Activated T-helper 1 cell treated with anti-CD3 and anti-CD28 coated beads, Interleukin-12 subunit alpha, Interleukin-12 subunit beta, Interleukin-2, Interleukin-4 antibody, amounts not matched to agents 30 ng/mL and 10 ng/mL and 1 ng/mL, durations not matched to agents 14 hours and 24 hours and 36 hours (primary cell): ENCODE measurements at regions of chr6 and their contacts with region 1.

Region 1: DNA sequence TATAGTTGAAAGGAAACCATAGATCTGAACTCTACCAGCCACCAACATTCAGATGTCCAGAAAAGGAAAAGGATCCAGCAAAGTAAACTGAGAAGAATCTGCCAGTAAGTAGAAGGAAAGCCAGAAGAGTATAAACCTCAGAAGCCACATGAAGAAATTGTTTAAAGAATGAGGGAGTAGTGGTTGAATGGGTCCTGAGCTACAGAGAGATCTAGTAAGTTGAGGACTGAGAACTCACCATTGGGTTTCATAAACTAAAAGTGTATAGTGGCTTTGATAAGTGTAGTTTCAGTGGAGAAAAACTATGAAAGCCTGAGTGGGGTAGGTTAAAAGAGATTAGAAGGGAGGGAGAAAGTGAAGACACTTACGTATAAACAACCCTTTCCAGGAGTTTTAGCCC is 32.0 kb upstream of the SUMO4 start:
- DNase-seq: no peak
- H3K4me3 Mint-ChIP-seq: no peak overlapping the region
- H3K27ac Mint-ChIP-seq: no peak overlapping the region
- H3K4me1 Mint-ChIP-seq: peaks cover 26% of the 10 kb centered on the region
- H3K27me3 Mint-ChIP-seq: no peaks in the 10 kb centered on the region

Region 2: GRCh38 chr6:149329529-149329928 is 38.5 kb before region 1 on chr6:
- intact Hi-C with region 1: loop called (anchors 2 kb)
- DNase-seq: no peak
- H3K4me3 Mint-ChIP-seq: peak overlapping the region; percentile 53
- H3K27ac Mint-ChIP-seq: peak overlapping the region; percentile 76
- H3K4me1 Mint-ChIP-seq: peaks cover 94% of the 10 kb centered on the region
- H3K27me3 Mint-ChIP-seq: no peaks in the 10 kb centered on the region

Region 3: DNA sequence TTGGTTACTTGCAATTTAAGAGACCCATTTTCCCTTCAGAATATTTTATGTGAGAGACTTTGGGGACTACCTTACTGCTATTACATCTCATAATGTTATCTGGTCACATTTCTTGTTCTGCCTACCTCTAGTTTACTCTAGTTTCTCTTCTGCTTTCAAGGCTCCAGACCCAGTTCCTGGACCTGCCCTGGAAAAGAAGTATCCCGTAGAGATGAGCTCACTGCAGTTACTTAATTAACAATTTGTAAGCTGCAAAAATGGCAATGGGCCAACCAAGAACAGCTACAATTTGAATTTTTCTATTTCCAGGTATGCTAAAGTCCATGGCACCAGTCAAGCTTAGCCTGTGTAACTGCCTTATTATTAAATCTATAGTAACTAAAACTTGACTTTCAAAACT is 25.5 kb before region 1 on chr6:
- intact Hi-C with region 1: loop called (anchors 2 kb)
- DNase-seq: no peak
- H3K4me3 Mint-ChIP-seq: peak overlapping the region; percentile 59
- H3K27ac Mint-ChIP-seq: peak overlapping the region; percentile 83
- H3K4me1 Mint-ChIP-seq: peaks cover 88% of the 10 kb centered on the region
- H3K27me3 Mint-ChIP-seq: no peaks in the 10 kb centered on the region

Region 4: GRCh38 chr6:149354009-149354408 is 14.1 kb before region 1 on chr6:
- intact Hi-C with region 1: loop called (anchors 1 kb)
- DNase-seq: no peak
- H3K4me3 Mint-ChIP-seq: no peak overlapping the region
- H3K27ac Mint-ChIP-seq: no peak overlapping the region
- H3K4me1 Mint-ChIP-seq: peaks cover 74% of the 10 kb centered on the region
- H3K27me3 Mint-ChIP-seq: no peaks in the 10 kb centered on the region

Region 5: DNA sequence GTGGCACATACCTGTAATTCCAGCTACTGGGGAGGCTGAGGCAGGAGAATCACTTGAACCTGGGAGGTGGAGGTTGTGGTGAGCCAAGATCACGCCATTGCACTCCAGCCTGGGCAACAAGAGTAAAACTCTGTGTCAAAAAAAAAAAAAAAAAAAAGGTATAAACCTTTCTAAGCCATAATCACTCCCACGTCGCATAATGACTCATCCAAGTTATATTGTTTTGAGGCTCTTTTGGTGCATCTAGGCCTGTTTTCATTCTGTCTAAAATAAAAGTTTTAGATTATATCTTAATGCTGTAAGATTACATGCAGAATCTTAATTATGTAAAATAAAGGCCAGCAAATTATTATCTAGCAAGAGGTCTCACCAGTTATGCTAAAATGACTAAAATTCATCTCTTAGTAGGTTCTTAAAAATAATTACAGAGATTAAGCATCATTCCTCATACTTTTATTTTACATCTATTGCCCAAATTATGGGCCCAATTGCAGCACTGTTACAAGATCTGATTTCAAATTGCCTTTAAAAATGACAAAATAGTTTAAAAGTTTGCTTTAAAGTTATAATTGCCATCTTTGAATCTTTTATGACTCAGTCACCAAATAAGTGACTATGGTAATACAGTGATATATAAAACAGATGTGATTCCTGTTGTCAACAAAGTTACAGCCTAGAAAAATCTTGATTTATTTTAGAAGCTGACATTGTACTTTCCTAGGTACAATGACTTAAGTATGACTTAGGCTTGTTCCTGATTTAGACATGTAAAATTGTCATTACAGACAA is 21.6 kb after region 1 on chr6:
- intact Hi-C with region 1: loop called (anchors 2 kb)
- DNase-seq: no peak
- H3K4me3 Mint-ChIP-seq: no peak overlapping the region
- H3K27ac Mint-ChIP-seq: peak overlapping the region; percentile 45
- H3K4me1 Mint-ChIP-seq: peaks cover 82% of the 10 kb centered on the region
- H3K27me3 Mint-ChIP-seq: no peaks in the 10 kb centered on the region

Region 6: GRCh38 chr6:149405823-149406765 is 38.0 kb after region 1 on chr6:
- intact Hi-C with region 1: loop called (anchors 5 kb)
- DNase-seq: no peak
- H3K4me3 Mint-ChIP-seq: no peak overlapping the region
- H3K27ac Mint-ChIP-seq: peak overlapping the region; percentile 76
- H3K4me1 Mint-ChIP-seq: peaks cover 55% of the 10 kb centered on the region
- H3K27me3 Mint-ChIP-seq: no peaks in the 10 kb centered on the region

Region 7: DNA sequence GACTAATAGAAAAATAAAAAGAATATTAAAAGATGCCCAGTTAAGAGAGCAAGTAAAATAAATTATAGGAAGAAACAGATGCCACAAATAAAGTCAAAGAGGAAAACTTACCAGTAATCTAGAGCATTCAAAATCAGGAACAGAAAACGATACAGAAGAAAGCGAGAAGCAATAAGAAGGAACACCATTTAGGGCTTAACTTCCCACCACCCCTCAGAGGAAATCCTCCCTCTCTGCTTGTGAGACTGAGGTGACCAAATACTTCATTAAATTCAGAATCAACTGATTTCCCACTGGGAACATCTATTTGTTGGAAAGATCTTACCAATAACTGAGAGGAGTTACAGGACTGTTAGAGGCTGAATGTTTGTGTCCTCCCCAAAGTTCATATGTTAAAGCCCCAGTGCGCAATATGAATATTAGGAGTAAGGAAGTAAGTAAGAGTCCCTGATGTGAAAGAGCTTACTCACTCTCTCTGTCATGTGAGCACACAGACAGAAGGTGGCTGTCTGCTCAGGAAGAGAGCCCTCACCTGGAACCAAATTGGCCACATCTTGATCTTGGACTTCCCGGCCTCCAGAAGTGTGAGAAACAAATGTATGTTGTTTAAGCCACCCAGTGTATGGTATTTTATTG is 260.9 kb after region 1 on chr6:
- intact Hi-C with region 1: no loop called
- DNase-seq: no peak
- H3K4me3 Mint-ChIP-seq: peak overlapping the region; percentile 5
- H3K27ac Mint-ChIP-seq: peak overlapping the region; percentile 9
- H3K4me1 Mint-ChIP-seq: peaks cover 6% of the 10 kb centered on the region
- H3K27me3 Mint-ChIP-seq: no peaks in the 10 kb centered on the region